Dendritic cell treated with granulocyte-macrophage colony-stimulating factor and Interleukin-4, amounts not matched to agents 40 ng/mL and 50 ng/mL, for 4 days (primary cell): ENCODE measurements at regions of chr6 and their contacts with region 1.

Region 1: DNA sequence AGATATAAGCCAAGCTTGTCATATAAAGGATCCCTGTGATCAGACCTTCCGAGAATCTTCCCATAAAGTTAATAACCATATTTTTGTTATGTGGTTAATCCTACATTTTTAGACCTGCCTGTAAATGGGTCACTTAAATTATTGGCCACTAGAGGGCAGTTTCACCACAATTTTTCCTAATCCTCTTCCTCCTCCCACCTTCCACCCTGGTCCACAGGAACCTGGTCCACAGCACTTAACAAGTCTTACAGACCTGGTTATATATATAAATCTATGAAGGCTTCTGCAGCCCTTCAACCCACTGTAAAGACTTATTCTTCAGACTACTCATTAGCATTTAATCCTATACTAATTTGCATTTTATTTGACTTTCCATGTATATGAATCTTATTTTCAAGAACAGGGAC is 28.3 kb downstream of the MRS2 start:
- H3K4me3 Mint-ChIP-seq: no peak overlapping the region
- H3K27ac Mint-ChIP-seq: no peak overlapping the region
- H3K4me1 Mint-ChIP-seq: peaks cover 17% of the 10 kb centered on the region
- H3K27me3 Mint-ChIP-seq: no peaks in the 10 kb centered on the region

Region 2: DNA sequence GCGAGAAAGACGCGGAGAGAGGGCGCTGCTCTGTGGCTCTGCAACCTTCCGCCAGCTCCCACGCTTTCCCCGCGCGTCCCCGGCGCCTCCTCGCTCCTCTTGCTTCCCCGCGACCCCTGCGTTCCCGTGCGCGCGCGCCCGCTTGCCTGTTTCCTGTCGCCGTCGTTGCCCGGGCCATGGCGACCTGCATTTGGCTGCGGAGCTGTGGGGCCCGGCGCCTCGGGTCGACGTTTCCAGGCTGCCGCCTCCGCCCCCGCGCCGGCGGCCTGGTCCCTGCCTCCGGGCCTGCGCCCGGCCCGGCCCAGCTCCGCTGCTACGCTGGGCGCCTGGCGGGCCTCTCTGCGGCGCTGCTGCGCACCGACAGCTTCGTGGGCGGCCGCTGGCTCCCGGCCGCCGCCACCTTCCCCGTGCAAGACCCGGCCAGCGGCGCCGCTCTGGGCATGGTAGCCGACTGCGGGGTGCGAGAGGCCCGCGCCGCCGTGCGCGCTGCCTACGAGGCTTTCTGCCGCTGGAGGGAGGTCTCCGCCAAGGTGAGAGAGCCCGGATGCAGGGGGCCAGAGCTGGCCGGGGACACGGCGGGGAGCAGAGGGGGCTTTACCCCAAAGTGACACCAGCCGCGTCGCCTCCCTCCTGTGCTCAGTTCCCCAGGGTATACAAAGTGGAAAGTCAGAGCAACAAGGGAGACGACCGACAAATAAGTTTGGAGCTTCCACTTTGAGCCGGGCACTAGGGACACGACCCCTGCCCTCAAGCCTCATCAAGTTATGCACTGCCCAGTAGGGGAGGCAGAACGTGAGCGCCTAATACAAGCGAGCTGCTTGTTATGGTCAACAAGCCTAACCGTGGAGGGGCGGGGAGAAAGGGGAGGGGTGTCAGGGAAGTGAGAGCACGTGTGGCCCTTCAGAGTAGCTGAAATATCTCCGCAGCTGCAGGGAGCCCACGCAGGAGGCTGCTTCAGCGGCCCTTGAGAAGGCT is 64.1 kb after region 1 on chr6 and contains the start of gene ALDH5A1:
- intact Hi-C with region 1: no loop called
- H3K4me3 Mint-ChIP-seq: peak within 1 kb of the TSS; percentile 77
- H3K27ac Mint-ChIP-seq: peak within 1 kb of the TSS; percentile 60
- H3K4me1 Mint-ChIP-seq: peaks cover 32% of the 10 kb centered on the region
- H3K27me3 Mint-ChIP-seq: peaks cover 36% of the 10 kb centered on the region

Region 3: GRCh38 chr6:24520929-24521546 is 90.0 kb after region 1 on chr6:
- intact Hi-C with region 1: loop called (anchors 1 kb)
- H3K4me3 Mint-ChIP-seq: no peak overlapping the region
- H3K27ac Mint-ChIP-seq: no peak overlapping the region
- H3K4me1 Mint-ChIP-seq: no peaks in the 10 kb centered on the region
- H3K27me3 Mint-ChIP-seq: no peaks in the 10 kb centered on the region

Region 4: GRCh38 chr6:24689964-24690363 is 258.9 kb after region 1 on chr6:
- intact Hi-C with region 1: loop called (anchors 5 kb)
- H3K4me3 Mint-ChIP-seq: no peak overlapping the region
- H3K27ac Mint-ChIP-seq: no peak overlapping the region
- H3K4me1 Mint-ChIP-seq: peaks cover 13% of the 10 kb centered on the region
- H3K27me3 Mint-ChIP-seq: no peaks in the 10 kb centered on the region

Region 5: GRCh38 chr6:25844518-25844917 is 1413.5 kb after region 1 on chr6:
- intact Hi-C with region 1: no loop called
- H3K4me3 Mint-ChIP-seq: no peak overlapping the region
- H3K27ac Mint-ChIP-seq: no peak overlapping the region
- H3K4me1 Mint-ChIP-seq: no peaks in the 10 kb centered on the region
- H3K27me3 Mint-ChIP-seq: no peaks in the 10 kb centered on the region